ENCODE measurements at regions of chr2 and their contacts with region 1.

Region 1: DNA sequence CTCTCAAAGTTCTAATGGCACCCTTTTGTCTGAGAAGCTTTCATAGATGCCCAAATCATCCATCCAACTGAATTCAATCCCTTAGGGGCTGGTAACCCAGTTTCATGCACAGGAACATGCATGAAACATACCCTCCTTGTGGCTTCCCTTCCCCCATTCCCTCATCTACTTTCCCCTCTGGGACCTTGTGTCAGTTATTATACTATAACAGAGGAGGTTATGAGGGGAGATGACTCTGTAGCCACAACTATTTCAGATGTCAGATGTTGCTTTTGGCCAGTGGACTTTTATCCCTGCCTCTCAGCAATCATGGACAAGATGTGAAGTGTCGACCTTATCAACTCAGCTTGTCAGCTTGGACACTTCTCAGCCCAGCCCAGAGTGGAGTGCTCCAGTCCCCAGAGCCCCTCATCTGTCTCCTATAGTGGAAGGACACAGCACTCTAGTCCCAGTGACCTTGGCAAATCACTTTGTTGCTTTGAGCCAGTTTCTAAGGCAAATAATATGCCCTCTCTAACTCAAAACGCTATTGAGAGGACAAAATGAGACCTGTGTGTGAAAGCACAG is 8.4 kb downstream of the DHRS9 start:
- DNase-seq: no peak
- ATAC-seq: peak; percentile 80

Region 2: GRCh38 chr2:168961450-168962229 is 116.1 kb before region 1 on chr2:
- intact Hi-C with region 1: no loop called
- DNase-seq: no peak
- ATAC-seq: peak; percentile 85

Region 3: GRCh38 chr2:169012812-169013627 is 64.7 kb before region 1 on chr2:
- intact Hi-C with region 1: loop called (anchors 5 kb)
- DNase-seq: no peak
- ATAC-seq: peak; percentile 33